Left cardiac atrium (tissue), 4 donors: ENCODE measurements at regions of chr14 and their contacts with region 1.

Region 1: GRCh38 chr14:94180655-94181271 is 6.6 kb downstream of the PPP4R4 start:
- DNase-seq: no peak
- ATAC-seq: peak; percentile 38 to 55

Region 2: DNA sequence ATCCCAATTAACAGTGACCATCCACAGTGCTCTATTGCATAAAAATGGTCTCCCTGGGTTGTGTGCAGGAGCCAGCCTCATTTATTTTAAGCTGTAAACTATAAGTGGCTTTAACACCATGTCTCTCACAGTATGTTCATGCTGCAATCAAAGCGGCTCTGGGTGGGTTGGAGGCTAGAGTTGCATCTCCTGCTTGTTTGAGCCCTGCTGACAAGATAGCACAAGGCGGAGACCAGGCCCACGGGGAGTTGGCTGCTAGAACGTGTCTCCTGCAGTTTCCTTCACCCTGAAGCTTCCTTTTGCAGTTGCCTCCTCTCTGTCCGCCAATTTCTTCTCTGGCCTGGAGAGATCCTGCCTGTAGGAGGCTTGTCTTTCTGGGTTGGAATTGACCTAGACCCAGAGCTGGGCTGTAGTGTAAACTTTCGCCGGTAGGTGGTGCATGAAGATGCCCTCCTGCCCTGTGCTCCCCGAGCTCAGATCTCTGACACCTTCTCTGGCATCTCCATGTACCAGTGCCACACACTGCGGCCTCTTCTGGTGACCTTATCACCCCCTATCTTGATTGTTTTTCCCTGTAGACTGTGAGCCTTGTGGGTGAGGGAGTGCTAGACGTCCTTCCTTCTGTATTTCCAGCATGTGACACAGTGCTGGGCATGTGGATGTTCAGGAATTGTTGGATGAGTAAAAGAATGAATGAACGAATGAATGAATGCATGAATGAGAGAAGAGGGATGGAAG is 144.3 kb before region 1 on chr14:
- intact Hi-C with region 1: loop called in 1 of 2 experiments (anchors 2 kb)
- DNase-seq: peak; percentile 73
- ATAC-seq: peak; percentile 90 to 92